ENCODE measurements at regions of chr2 and their contacts with region 1.

Region 1: DNA sequence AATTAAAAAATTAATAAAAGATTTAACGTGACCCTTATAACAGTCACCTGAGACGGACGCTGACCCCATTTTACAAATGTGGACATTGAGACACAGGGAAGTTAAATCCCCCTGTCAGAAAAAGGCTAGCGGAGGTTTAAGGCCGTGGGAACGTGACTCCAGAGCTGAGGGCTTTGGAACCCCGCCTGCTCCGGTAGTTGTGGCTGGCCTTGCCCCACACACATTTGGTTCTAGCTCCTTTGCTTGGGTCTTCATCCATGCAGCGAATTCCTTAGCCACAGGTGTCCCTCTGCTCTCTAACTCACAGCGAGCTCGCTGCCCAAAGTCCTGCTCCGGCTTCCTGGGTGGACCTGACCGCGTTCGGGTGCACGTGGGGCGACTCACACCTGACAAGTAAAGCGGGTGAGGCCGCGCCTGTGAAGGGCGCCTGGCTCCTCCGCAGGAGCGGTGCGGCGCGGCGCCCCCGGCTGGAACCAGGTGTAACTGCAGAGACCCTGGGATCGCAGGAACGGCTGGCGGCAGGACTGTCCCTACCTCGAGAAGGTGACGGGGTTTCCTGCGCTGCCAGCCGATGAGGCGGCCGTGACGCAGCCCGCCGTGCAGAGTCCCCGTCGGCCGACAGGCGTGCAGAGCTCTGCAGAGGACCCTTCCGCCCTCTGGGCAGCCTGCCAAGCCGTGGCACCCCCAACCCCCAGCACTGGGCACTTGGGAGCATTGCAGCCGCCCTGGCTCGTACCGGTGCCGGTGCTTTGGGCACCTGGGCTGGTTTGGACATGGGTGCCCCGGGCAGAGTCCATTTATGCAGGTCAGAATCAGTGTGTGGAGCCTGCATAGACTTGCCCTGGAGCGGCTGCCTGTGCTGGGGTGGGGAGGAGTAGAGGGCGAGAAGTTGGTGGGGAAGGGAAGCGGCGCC is 2.4 kb upstream of the PROC start:
- DNase-seq: peak; percentile 72
- H3K4me3 ChIP-seq: peak overlapping the region; percentile 26 to 45 (median 43)
- H3K27ac ChIP-seq: peak overlapping the region; percentile 10
- H3K4me1 ChIP-seq: peaks cover 47% of the 10 kb centered on the region
- H3K27me3 ChIP-seq: no peaks in the 10 kb centered on the region
- CTCF ChIP-seq: peak; percentile 45 to 77

Region 2: GRCh38 chr2:127197475-127198385 is 218.1 kb before region 1 on chr2:
- CTCF ChIA-PET with region 1: no interaction called
- dilution Hi-C with region 1: no loop called
- in situ Hi-C with region 1: no loop called
- intact Hi-C with region 1: no loop called
- DNase-seq: no peak
- H3K4me3 ChIP-seq: no peak overlapping the region
- H3K27ac ChIP-seq: no peak overlapping the region
- H3K4me1 ChIP-seq: no peaks in the 10 kb centered on the region
- H3K27me3 ChIP-seq: no peaks in the 10 kb centered on the region
- CTCF ChIP-seq: peak; percentile 42 to 63

Region 3: DNA sequence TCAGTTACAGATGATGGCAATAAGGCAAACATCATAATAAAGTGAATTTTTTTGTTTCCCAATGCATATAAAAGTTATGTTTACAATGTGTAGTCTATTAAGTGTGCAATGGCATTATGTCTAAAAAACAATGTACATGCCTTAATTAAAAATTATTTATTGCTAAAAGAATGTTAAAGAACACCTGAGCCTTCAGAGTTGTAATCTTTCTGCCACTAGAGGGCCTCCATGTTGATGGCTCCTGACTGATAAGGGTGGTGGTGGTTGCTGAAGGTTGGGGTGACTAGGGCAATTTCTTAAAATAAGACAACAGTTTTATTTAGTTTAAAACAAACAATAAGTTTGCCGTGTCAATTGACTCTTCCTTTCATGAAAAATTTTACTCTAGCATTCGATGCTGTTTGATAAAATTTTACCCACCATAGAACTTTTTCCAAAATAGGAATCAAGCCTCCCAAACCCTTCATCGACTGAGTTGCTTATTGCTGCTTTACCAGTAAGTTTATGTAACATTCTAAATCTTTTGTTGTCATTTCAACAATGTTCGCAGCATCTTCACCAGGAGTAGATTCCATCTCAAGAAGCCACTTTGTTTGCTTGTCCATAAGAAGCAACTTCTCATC is 60.4 kb before region 1 on chr2:
- CTCF ChIA-PET with region 1: no interaction called
- dilution Hi-C with region 1: loop called (anchors 10 kb)
- in situ Hi-C with region 1: no loop called
- intact Hi-C with region 1: loop called (anchors 1 kb)
- DNase-seq: peak; percentile 28
- H3K4me3 ChIP-seq: no peak overlapping the region
- H3K27ac ChIP-seq: no peak overlapping the region
- H3K4me1 ChIP-seq: no peaks in the 10 kb centered on the region
- H3K27me3 ChIP-seq: no peaks in the 10 kb centered on the region
- CTCF ChIP-seq: peak; percentile 74 to 82

Region 4: DNA sequence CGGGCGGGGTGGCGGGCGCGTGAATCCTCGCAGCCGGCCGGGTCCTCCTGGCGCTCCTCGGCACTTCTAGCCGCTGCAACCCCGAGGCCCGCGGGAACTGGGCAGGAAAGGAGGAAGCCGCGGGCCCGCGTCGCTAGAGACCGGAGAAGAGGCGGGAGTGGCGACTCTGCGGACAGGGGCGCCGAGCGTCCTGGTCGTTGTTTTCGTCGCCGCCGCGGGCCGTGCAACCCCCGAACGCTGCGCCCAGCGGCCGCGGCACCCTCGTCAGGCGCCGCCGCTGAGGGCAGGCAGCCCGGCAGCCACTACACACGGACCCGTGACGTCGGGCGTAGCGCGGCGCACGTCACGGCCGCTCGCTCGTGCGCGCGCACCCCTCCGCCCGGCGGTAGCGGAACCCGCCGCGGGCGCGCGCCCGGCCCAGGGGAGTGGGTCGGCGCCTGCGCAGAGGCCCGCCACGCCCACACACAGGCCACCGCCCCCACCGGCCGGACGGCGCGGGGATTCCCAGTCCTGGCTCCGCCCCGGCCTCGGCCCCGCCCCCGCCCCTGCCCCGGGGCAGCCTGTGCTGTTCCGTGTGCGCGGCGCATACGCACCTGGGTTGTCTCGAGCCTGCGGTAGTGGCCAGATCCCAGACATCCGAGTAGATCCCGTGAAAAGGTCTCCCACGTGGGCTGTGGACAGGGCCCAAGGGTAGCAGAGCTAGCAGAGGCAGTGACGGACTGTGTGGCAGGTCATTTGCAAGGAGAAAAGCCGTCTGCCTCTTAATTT is 28.0 kb before region 1 on chr2 and contains the start of gene MAP3K2:
- CTCF ChIA-PET with region 1: no interaction called
- dilution Hi-C with region 1: no loop called
- in situ Hi-C with region 1: no loop called
- intact Hi-C with region 1: loop called (anchors 1 kb)
- DNase-seq: peak; percentile 91
- H3K4me3 ChIP-seq: peak within 1 kb of the TSS; percentile 54 to 90 (median 76)
- H3K27ac ChIP-seq: peak within 1 kb of the TSS; percentile 95
- H3K4me1 ChIP-seq: peaks cover 18% of the 10 kb centered on the region
- H3K27me3 ChIP-seq: no peaks in the 10 kb centered on the region
- CTCF ChIP-seq: no peak
- total RNA-seq, gene MAP3K2: 50.4 to 65.5 TPM

Region 5: DNA sequence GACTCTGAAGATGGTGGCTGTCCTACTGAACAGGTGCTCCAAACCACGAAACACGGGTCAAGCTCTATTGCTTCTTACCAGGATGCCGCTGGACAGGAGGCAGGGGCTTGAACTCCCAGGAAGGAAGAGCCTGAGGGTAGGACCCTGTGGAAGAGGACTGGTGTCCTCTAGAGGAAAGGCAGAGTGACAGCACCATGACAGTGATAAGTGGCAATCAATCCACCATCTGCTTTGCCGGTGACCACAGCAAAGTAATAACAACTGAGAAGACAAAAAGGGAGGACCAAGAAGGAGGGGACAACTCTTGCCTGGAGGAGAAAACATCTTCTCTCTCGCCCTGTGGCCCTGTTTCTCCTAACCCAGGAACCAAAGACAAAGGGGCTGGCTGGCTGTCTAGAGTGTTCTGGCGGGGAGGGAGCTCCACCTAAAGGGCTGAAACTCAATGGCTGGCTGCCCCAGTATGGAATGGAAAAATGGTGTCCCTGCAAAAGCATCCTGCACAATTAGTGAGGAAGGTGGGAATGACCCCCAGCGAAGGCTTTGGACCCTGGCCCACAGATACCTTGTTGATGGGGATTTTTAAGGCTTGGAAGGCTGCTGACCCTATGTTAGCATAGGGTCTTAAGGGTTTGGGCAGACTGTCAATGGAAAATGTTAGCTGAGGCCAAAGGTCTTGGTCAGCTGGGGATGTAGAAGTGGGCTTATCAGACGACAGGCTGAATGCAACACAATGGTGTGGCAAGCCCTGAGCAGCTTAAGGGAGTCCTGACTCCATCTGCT is 37.7 kb after region 1 on chr2:
- CTCF ChIA-PET with region 1: no interaction called
- dilution Hi-C with region 1: no loop called
- in situ Hi-C with region 1: no loop called
- intact Hi-C with region 1: no loop called
- DNase-seq: no peak
- H3K4me3 ChIP-seq: no peak overlapping the region
- H3K27ac ChIP-seq: no peak overlapping the region
- H3K4me1 ChIP-seq: no peaks in the 10 kb centered on the region
- H3K27me3 ChIP-seq: no peaks in the 10 kb centered on the region
- CTCF ChIP-seq: peak; percentile 18 to 35

Region 6: DNA sequence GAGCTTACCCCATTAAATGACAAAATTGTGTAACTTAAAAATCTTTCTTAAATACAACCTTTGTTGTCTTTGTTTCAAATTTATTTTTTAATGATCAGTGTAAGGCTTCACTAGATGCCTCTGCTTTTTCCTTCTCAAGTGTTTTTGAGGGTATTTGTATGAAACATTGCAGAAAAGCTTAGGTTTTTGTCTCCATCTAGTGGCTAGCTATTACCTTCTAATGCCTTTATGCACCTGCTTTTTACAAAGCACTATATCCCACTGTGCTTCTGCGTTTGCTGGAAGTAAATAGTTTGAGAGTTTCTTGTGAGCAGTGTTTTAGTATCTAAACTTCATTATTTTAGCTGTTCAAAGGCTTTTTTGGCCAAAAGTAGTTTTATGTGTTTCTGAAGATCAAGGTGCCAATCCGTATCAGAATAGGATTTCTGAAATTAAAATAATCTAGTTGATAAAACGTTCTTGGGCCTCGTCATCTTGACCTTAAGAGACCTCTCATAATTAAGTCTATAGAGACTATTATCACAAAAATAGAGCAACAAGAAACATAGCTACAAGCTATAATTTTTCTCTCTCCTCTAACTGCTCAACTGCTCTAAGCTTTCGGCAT is 63.5 kb after region 1 on chr2:
- CTCF ChIA-PET with region 1: no interaction called
- dilution Hi-C with region 1: no loop called
- in situ Hi-C with region 1: no loop called
- intact Hi-C with region 1: loop called (anchors 2 kb)
- DNase-seq: peak; percentile 12
- H3K4me3 ChIP-seq: no peak overlapping the region
- H3K27ac ChIP-seq: no peak overlapping the region
- H3K4me1 ChIP-seq: no peaks in the 10 kb centered on the region
- H3K27me3 ChIP-seq: no peaks in the 10 kb centered on the region
- CTCF ChIP-seq: peak; percentile 68 to 71

Region 7: DNA sequence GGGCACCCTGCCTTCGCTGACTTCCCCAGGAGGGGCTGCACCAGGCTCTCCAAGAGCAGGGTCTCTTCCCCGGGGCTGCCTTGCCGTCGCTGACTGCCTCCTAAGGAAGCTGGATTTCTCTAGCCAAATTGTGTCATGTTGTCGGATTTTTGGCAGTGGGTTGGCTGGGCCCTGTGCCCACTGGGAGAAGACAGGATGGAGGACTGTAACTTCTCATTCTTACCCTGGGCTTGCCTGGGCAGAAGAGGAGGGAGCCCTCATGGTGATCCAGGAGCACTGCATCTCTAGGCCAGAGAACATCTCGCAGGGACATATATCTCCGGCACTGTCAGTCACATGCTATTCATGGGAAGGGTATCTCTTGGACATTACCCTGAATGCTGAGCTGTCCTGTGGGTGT is 126.0 kb after region 1 on chr2:
- CTCF ChIA-PET with region 1: no interaction called
- dilution Hi-C with region 1: no loop called
- in situ Hi-C with region 1: no loop called
- intact Hi-C with region 1: no loop called
- DNase-seq: no peak
- H3K4me3 ChIP-seq: no peak overlapping the region
- H3K27ac ChIP-seq: no peak overlapping the region
- H3K4me1 ChIP-seq: no peaks in the 10 kb centered on the region
- H3K27me3 ChIP-seq: peaks cover 5% of the 10 kb centered on the region
- CTCF ChIP-seq: no peak